Gastrocnemius medialis (tissue), 4 donors: ENCODE measurements at regions of chr13 and their contacts with region 1.

Region 1: GRCh38 chr13:45367358-45367757 is 26.4 kb upstream of the TPT1 start:
- DNase-seq: peak in 1 of 2 donors; percentile 39
- ATAC-seq: no peak
- H3K4me3 ChIP-seq: no peak overlapping the region
- H3K27ac ChIP-seq: no peak overlapping the region
- H3K4me1 ChIP-seq: peaks cover 21 to 30% of the 10 kb centered on the region in 2 donors
- H3K27me3 ChIP-seq: no peaks in the 10 kb centered on the region
- CTCF ChIP-seq: no peak
- POLR2A ChIP-seq: no peak

Region 2: GRCh38 chr13:45490068-45490467 is 122.7 kb after region 1 on chr13:
- in situ Hi-C with region 1: loop called in 1 of 4 experiments (anchors 10 kb)
- intact Hi-C with region 1: loop called (anchors 5 kb)
- DNase-seq: no peak
- ATAC-seq: no peak
- H3K4me3 ChIP-seq: no peak overlapping the region
- H3K27ac ChIP-seq: no peak overlapping the region
- H3K4me1 ChIP-seq: no peaks in the 10 kb centered on the region
- H3K27me3 ChIP-seq: no peaks in the 10 kb centered on the region
- CTCF ChIP-seq: peak in 1 of 5 experiments; percentile 18
- POLR2A ChIP-seq: no peak